Activated B cell treated with CpG ODN at 0.5 μM for 24 hours (primary cell): ENCODE measurements at regions of chr4 and their contacts with region 1.

Region 1: GRCh38 chr4:75940692-75941253 is at the start of gene NAAA:
- DNase-seq: peak; percentile 74
- ATAC-seq: peak; percentile 75
- H3K4me3 Mint-ChIP-seq: peak within 1 kb of the TSS; percentile 98
- H3K27ac Mint-ChIP-seq: peak within 1 kb of the TSS; percentile 99
- H3K4me1 Mint-ChIP-seq: peaks cover 14% of the 10 kb centered on the region
- H3K27me3 Mint-ChIP-seq: no peaks in the 10 kb centered on the region
- CTCF ChIP-seq: no peak
- total RNA-seq, gene NAAA: 27.7 and 31.1 TPM in 2 replicates

Region 2: DNA sequence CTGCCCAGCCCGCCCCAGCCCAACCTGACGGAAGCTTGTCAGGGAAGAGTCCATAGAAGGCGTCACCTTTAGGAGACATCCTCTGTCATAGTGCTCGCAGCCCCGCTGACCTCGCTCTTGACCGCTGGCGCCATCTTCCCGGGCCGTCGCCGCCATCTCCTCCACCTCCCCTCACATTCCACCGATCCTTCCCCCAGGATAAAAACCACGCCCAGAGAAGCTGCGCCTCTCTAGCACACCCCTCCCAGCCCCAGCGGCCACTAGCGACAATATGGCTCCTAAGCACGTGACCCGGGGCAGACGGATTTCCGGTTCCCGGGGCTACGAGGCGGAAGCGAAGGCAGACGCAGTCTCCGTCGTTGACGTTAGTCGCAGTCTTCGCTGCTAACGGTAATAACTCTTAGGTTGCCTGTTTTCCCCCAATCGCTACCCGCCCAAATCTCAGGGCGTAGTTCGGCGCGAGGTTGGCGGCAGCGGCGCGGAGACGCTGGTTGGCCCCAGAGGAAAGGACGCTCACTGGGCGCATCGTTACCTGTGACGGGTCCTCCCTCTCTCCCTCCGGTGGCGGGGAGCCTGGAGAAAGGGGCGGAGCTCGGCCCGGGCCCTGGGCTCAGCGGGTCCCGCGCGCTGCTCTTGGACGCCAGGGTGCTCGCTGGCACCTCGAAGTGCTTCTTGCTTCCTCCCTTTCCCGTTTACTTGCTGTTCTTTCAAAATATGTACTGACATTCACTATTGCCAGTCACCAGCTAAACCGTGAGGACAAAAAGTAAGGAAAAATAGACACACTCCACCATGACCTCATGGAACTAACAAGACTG is 426.4 kb before region 1 on chr4 and contains the starts of genes RCHY1 and THAP6:
- CTCF ChIA-PET with region 1: no interaction called
- POLR2A ChIA-PET with region 1: interaction called, 12 read pairs
- intact Hi-C with region 1: loop called (anchors 2 kb)
- DNase-seq: peak; percentile 88
- ATAC-seq: peak; percentile 87
- H3K4me3 Mint-ChIP-seq: no peak within 1 kb of the TSS
- H3K27ac Mint-ChIP-seq: peak within 1 kb of the TSS; percentile 95
- H3K4me1 Mint-ChIP-seq: peaks cover 39% of the 10 kb centered on the region
- H3K27me3 Mint-ChIP-seq: no peaks in the 10 kb centered on the region
- CTCF ChIP-seq: no peak
- total RNA-seq, gene RCHY1: 28.5 and 29.6 TPM in 2 replicates
- total RNA-seq, gene THAP6: 17.4 and 24.6 TPM in 2 replicates

Region 3: DNA sequence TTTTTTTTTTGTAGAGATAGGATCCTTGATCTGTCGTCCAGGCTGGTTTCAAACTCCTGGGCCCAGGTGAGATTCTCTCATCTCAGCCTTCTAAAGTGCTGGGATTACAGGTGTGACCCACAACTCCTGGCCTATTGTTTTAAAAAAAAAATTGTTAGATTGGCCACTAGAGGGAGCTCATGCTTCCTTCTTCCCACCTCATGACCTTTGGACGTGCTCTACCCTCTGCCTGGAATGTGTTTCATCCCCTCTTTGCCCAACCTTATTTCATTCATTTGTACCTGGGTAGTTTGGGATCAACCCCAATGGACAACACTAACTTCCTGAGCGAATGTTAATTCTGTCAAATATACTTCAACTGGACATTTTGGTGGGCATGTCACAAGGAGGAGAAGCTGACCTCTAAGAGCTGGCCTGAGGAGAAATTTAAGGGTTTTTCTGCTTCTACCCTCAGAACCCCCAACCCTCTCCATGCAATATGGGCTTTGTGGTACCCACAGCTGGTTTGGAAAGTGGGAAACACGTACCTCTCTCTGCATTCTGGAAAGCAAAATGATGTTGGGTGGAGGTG is 44.9 kb before region 1 on chr4:
- CTCF ChIA-PET with region 1: interaction called, 11 read pairs
- POLR2A ChIA-PET with region 1: no interaction called
- intact Hi-C with region 1: loop called (anchors 1 kb)
- DNase-seq: no peak
- ATAC-seq: peak; percentile 70
- H3K4me3 Mint-ChIP-seq: no peak overlapping the region
- H3K27ac Mint-ChIP-seq: no peak overlapping the region
- H3K4me1 Mint-ChIP-seq: no peaks in the 10 kb centered on the region
- H3K27me3 Mint-ChIP-seq: no peaks in the 10 kb centered on the region
- CTCF ChIP-seq: no peak

Region 4: GRCh38 chr4:75916091-75916661 is 24.6 kb before region 1 on chr4:
- CTCF ChIA-PET with region 1: interaction called, 8 read pairs
- POLR2A ChIA-PET with region 1: interaction called, 5 read pairs
- intact Hi-C with region 1: loop called (anchors 2 kb)
- DNase-seq: no peak
- ATAC-seq: peak; percentile 81
- H3K4me3 Mint-ChIP-seq: no peak overlapping the region
- H3K27ac Mint-ChIP-seq: no peak overlapping the region
- H3K4me1 Mint-ChIP-seq: no peaks in the 10 kb centered on the region
- H3K27me3 Mint-ChIP-seq: no peaks in the 10 kb centered on the region
- CTCF ChIP-seq: peak; percentile 69

Region 5: GRCh38 chr4:76055016-76055415 is 114.2 kb after region 1 on chr4:
- CTCF ChIA-PET with region 1: no interaction called
- POLR2A ChIA-PET with region 1: interaction called, 3 read pairs
- intact Hi-C with region 1: loop called (anchors 2 kb)
- DNase-seq: no peak
- ATAC-seq: peak; percentile 96
- H3K4me3 Mint-ChIP-seq: no peak overlapping the region
- H3K27ac Mint-ChIP-seq: peak overlapping the region; percentile 81
- H3K4me1 Mint-ChIP-seq: peaks cover 34% of the 10 kb centered on the region
- H3K27me3 Mint-ChIP-seq: no peaks in the 10 kb centered on the region
- CTCF ChIP-seq: no peak

Region 6: DNA sequence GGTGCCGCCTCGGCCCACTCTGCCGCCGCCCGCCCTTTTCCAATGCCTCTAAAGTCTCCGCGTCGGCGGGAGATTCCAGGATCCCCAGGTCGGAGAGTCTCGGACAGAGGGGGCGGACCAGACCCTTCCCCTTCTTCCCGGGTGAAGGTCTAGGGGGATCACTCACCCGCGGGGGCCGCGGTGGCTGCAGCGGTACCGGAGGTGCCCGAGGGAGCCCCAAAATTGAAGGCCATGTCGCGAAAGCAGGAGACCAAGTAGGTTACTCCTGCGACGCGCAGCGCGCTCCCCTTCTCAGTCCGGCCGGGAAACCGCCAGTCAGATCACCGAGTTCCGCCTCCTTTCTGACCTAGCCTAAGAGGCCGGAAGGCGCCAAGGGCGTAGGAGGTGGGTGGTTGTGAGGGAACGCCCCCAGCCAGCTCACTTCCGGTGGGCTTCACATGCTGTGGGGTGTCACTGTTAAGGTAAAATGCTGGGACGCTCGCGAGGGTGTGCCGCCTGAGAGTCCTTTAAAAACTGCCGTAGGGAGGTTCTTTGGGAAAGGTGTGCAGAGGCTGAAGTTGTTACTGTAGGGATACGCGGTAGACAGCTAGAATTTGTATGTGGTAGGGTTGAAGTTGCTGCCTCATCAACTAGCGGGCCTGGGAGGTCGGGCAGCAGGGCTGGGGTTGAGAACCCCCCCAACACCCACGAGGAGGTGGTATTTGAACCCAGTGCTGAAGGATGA is 207.5 kb after region 1 on chr4 and contains the start of gene NUP54:
- CTCF ChIA-PET with region 1: no interaction called
- POLR2A ChIA-PET with region 1: interaction called, 3 read pairs
- intact Hi-C with region 1: loop called (anchors 2 kb)
- DNase-seq: peak; percentile 93
- ATAC-seq: peak; percentile 98
- H3K4me3 Mint-ChIP-seq: peak within 1 kb of the TSS; percentile 98
- H3K27ac Mint-ChIP-seq: peak within 1 kb of the TSS; percentile 94
- H3K4me1 Mint-ChIP-seq: peaks cover 33% of the 10 kb centered on the region
- H3K27me3 Mint-ChIP-seq: no peaks in the 10 kb centered on the region
- CTCF ChIP-seq: no peak
- total RNA-seq, gene NUP54: 48.1 and 58.9 TPM in 2 replicates

Region 7: DNA sequence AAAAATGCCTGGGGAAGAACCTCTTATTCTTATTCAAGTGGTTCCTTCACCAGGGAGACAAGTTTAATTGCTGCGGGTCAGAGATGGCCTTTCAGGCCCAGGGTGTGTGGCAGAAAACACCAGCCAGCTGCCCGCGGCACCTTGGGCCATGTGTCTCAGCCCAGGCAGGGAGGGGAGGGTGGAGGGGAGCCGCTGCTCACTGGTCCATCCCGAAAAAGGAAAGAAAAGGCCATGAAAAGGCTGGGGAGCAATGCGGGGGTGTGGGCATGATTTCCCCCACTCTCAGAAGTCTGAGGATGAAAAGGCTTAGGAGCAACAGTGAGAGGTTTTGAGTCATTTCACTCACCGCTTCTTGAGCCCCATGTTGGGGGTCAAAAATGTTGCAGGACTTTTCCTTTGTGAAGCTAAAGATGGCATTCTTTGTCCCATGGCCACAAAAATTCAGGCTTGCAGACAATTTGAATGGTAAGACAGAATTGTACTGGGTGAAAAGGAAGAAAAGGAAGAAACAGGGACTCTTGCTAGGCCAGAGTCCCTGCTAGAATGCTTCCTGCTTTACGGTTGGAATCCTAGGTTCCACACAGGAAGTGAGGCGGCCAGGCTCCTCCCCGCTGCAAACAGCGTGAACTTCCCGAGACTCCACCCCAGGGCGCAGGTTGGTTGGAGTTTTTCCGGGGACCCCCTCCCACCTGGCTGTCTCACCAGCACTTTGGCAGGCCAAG is 293.3 kb after region 1 on chr4:
- CTCF ChIA-PET with region 1: no interaction called
- POLR2A ChIA-PET with region 1: no interaction called
- intact Hi-C with region 1: no loop called
- DNase-seq: no peak
- ATAC-seq: no peak
- H3K4me3 Mint-ChIP-seq: no peak overlapping the region
- H3K27ac Mint-ChIP-seq: no peak overlapping the region
- H3K4me1 Mint-ChIP-seq: no peaks in the 10 kb centered on the region
- H3K27me3 Mint-ChIP-seq: peaks cover 4% of the 10 kb centered on the region
- CTCF ChIP-seq: no peak